ENCODE measurements at regions of chr3 and their contacts with region 1.

Region 1: DNA sequence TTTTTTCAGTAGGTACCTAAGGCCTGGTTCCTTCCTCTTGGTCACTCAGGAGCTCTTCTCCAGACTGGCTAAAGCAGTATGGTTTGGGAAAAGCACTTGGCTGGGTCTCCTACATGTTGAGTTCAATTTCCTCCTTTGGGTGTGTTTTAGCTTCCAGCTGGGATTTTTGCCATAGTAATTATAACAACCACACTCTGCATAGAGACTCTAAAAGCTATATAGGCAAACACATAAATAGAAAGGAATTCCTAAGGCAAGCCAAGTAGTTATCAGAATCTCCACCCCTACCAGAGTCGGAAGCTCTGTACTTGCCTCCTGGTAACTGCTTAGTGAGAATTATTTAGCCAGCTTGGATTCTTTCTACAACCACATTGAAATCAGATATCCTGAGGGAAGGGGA is 48.6 kb downstream of the FOXL2 start:
- DNase-seq: no peak
- ATAC-seq: peak; percentile 91
- H3K4me3 ChIP-seq: no peak overlapping the region
- H3K27ac ChIP-seq: no peak overlapping the region
- H3K4me1 ChIP-seq: no peaks in the 10 kb centered on the region
- H3K27me3 ChIP-seq: no peaks in the 10 kb centered on the region
- CTCF ChIP-seq: no peak

Region 2: GRCh38 chr3:138774529-138775253 is 123.6 kb before region 1 on chr3:
- CTCF ChIA-PET with region 1: no interaction called
- POLR2A ChIA-PET with region 1: interaction called, 17 read pairs
- intact Hi-C with region 1: no loop called
- DNase-seq: peak; percentile 92
- ATAC-seq: peak; percentile 96
- H3K4me3 ChIP-seq: peak overlapping the region; percentile 26; the same call in 1 of the 2 replicates
- H3K27ac ChIP-seq: peak overlapping the region; percentile 62
- H3K4me1 ChIP-seq: peaks cover 32% of the 10 kb centered on the region
- H3K27me3 ChIP-seq: no peaks in the 10 kb centered on the region
- CTCF ChIP-seq: no peak

Measured in PC-3 (cell line).